HEK293T (cell line): ENCODE measurements at regions of chr20 and their contacts with region 1.

Region 1: DNA sequence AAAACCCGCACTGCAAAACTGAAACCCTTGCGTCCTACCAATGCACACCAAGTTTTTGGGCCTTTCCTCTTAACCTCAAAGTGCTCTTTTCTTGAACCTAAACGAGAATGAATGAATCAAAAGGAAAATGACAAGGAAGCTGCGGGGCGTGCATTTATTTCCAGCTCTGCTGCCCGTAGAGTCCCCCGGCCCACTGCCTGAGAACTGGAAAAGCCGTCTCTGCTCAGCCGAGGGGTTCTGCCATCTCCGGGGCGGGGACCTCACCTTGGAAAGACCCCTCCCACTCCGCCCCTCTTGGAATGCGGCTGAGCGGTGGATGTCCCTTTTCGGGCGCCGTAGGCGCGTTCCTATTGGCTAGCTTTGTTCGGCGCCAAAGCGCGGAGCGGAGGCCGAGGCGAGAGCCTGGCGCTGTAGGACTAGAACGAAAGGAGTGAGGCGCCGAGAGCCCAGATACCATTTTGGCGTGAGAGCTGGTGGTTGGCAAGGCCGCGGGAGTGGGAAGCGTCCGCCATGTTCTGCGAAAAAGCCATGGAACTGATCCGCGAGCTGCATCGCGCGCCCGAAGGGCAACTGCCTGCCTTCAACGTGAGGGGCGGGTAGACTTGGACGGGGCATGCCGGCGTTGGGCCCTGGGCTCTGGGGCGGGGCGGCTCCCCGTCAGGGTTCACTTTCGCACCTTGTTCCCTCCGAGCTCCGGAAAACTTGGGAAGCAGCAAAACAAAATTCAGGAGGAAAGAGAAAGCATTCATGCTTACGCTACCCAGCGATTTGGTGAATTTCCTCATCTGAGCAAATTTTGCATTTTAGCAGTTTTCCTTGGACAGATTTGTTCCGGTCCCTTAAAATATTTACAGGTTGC is at the start of gene GINS1:
- DNase-seq: peak; percentile 89

Region 2: DNA sequence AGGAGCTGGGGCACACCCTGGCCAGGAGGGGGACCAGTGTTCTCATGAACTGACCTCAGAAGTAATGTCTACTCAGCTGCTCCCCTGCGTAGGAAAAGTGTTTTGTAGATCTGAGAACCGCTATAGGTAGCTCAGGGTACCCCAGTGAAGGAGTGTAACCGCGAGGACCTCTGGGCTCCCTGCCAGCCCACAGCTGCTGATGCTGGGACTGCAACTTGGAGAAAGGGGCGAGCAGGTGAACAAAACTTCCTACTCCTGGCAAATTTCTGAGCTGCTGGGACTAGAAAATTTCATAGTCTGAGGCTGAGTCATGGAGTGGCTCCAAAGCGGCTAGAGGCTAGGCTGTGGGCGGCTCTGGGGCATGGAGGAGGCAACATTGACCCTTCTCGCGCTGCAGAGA is 107.7 kb before region 1 on chr20:
- CTCF ChIA-PET with region 1: no interaction called
- POLR2A ChIA-PET with region 1: interaction called, 10 read pairs
- DNase-seq: no peak

Region 3: GRCh38 chr20:25418776-25419175 is 11.2 kb after region 1 on chr20:
- CTCF ChIA-PET with region 1: interaction called, 4 read pairs
- POLR2A ChIA-PET with region 1: interaction called, 13 read pairs
- DNase-seq: no peak